ENCODE measurements at regions of chr5 and their contacts with region 1.

Region 1: DNA sequence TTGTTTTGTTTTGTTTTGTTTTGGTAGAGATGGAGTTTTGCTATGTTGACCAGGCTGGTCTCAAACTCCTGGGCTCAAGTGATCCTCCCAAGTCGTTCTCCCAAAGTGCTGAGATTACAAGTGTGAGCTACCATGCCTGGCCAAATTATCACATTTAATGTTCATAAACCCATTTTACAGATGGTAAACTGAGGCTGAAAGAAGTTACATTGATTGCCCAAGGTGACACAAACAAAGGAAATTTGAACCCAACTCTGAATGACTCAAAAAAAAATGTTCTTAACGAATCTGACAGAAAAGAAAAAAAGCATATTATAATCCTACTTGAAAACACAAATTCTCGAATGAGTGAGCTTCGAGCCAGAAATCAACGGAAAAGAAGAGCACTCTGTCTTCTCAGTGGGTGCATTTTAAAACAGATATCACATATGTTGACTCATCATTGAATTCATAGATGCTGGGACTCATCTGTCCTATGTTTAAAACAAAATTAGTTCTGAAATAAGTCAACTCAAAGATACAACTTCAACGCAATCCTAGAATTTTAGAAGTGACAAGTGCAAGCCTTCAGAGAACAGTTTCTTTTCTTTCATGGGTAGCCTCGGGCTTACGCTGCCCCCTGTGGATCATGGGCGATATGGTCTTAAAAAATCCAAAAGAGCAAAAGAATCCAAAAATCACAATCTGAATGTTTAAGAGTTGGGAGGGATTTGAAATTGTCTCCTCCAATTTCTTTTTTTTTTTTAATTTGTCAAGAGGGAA is 28.4 kb downstream of the TIMD4 start:
- DNase-seq: peak; percentile 90
- H3K4me3 Mint-ChIP-seq: peak overlapping the region; percentile 46
- H3K27ac Mint-ChIP-seq: peak overlapping the region; percentile 93
- H3K4me1 Mint-ChIP-seq: peaks cover 76% of the 10 kb centered on the region
- H3K27me3 Mint-ChIP-seq: no peaks in the 10 kb centered on the region

Region 2: GRCh38 chr5:155616779-155617392 is 1317.7 kb before region 1 on chr5:
- intact Hi-C with region 1: loop called (anchors 5 kb)
- DNase-seq: peak; percentile 84
- H3K4me3 Mint-ChIP-seq: no peak overlapping the region
- H3K27ac Mint-ChIP-seq: no peak overlapping the region
- H3K4me1 Mint-ChIP-seq: no peaks in the 10 kb centered on the region
- H3K27me3 Mint-ChIP-seq: peaks cover 11% of the 10 kb centered on the region

Region 3: DNA sequence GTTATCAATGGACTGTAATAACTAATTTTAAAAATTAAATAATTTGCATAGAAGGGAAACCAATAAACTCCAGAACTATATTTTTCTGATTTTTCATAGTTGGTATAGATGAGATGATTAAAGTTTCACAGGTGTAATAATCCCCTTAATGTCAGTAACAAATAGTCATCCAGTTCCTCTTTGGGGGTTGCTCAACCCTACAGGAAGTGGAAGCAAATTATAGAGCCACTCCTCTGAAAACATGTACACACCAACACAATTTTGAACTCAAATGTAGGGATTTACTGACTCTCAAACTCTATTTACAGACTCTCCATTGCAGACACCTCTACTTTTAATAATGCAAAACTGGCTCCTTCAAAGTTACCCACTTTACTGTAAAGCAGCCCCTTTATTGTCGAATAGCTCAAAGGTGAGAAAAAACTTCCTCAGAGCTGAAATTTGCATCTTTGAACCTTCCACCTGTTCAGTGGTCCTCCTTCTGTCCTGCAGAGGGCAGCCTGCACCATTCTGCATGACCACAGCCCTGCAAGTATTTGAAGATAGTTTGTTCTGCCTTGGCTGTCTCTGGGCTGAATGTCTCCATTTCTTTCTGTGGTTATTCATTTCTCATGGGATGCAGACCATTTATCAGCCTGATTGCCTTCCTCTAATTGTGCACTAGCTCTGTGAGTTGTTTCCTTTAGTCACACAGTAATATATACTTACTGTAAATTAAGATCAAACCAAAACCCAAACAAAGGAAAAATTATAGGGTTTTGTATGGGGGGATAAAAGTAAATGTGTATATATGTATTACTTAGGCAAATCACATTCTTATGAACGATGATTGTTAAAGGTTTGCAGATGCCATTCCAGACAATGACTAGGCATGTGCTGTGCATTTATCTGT is 990.9 kb before region 1 on chr5:
- intact Hi-C with region 1: loop called (anchors 10 kb)
- DNase-seq: peak; percentile 77
- H3K4me3 Mint-ChIP-seq: no peak overlapping the region
- H3K27ac Mint-ChIP-seq: no peak overlapping the region
- H3K4me1 Mint-ChIP-seq: peaks cover 4% of the 10 kb centered on the region
- H3K27me3 Mint-ChIP-seq: peaks cover 11% of the 10 kb centered on the region

Region 4: DNA sequence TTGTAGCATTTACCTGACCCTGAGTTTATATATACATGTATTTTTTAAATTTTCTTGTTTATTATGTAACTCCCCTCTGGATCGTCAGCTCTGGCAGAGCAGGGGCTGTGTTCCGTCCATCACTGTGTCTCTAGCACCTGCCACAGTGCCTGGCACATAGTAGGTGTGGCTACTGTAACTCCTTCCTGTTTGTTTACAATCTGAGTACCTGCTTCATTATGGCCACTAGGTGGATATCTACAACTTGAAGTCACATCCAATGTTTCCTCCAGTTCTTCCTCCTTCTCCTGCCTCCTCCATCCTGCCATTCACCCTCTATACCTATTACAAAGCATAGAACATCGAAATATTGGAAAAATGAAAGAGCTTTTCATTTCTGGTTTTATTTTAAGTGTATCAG is 98.7 kb before region 1 on chr5:
- intact Hi-C with region 1: loop called (anchors 5 kb)
- DNase-seq: peak; percentile 57
- H3K4me3 Mint-ChIP-seq: no peak overlapping the region
- H3K27ac Mint-ChIP-seq: no peak overlapping the region
- H3K4me1 Mint-ChIP-seq: peaks cover 20% of the 10 kb centered on the region
- H3K27me3 Mint-ChIP-seq: no peaks in the 10 kb centered on the region

Region 5: DNA sequence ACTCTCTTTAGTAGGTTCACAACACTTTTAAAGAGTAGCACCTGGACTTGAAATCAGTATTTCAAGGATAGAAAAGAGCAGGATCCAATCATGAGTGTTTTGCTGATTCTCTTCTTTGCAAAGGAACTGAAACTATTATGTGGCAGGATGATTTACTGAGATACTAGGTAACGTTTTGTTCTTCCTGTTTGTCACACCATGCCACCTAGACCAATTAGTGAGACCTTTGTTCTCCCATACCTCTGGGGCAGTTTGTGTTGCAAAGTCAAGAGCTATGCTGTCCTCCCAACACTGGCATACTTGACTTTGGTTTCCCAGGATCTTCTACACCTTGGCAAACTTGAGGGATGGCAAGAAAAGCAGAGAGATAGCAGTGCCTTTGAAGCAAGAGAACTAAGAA is 41.1 kb before region 1 on chr5:
- intact Hi-C with region 1: loop called (anchors 1 kb)
- DNase-seq: peak; percentile 65
- H3K4me3 Mint-ChIP-seq: peak overlapping the region; percentile 59
- H3K27ac Mint-ChIP-seq: peak overlapping the region; percentile 88
- H3K4me1 Mint-ChIP-seq: peaks cover 42% of the 10 kb centered on the region
- H3K27me3 Mint-ChIP-seq: no peaks in the 10 kb centered on the region

Measured in activated CD4-positive, alpha-beta T cell treated with anti-CD3 and anti-CD28 coated beads, Interleukin-2, amount 10 ng/mL, durations not matched to agents 24 days and 14 days (primary cell).